PC-3 (cell line): ENCODE measurements at regions of chr1 and their contacts with region 1.

Region 1: GRCh38 chr1:52007215-52008002 is 16.9 kb upstream of the RAB3B start:
- DNase-seq: no peak
- ATAC-seq: no peak
- H3K4me3 ChIP-seq: no peak overlapping the region
- H3K27ac ChIP-seq: no peak overlapping the region
- H3K4me1 ChIP-seq: peaks cover 7% of the 10 kb centered on the region; the same call in 1 of the 2 replicates
- H3K27me3 ChIP-seq: no peaks in the 10 kb centered on the region
- CTCF ChIP-seq: no peak

Region 2: DNA sequence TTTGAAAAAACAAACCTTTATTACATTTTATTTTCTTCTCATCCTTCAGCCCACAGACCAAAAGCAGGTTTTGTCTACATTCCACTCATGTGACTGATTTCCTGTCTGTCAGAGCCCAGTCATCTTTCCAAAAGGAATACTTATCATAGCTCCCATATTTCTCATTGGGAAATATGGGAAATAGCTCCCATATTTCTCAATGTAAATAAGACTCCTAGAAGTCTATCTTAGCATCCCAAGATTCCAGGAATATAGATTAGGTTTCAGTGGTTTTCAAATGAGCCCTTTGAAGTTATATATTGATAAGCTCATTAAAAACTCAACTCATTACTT is 109.7 kb before region 1 on chr1:
- CTCF ChIA-PET with region 1: no interaction called
- POLR2A ChIA-PET with region 1: interaction called, 16 read pairs
- intact Hi-C with region 1: loop called (anchors 1 kb)
- DNase-seq: peak; percentile 94
- ATAC-seq: peak; percentile 82
- H3K4me3 ChIP-seq: peak overlapping the region; percentile 56; the same call in 1 of the 2 replicates
- H3K27ac ChIP-seq: peak overlapping the region; percentile 86
- H3K4me1 ChIP-seq: peaks cover 29% of the 10 kb centered on the region
- H3K27me3 ChIP-seq: no peaks in the 10 kb centered on the region
- CTCF ChIP-seq: no peak

Region 3: GRCh38 chr1:51973603-51974474 is 33.6 kb before region 1 on chr1:
- CTCF ChIA-PET with region 1: no interaction called
- POLR2A ChIA-PET with region 1: no interaction called
- intact Hi-C with region 1: no loop called
- DNase-seq: peak; percentile 49
- ATAC-seq: peak; percentile 9; the same call in 1 of the 2 replicates
- H3K4me3 ChIP-seq: no peak overlapping the region
- H3K27ac ChIP-seq: peak overlapping the region; percentile 20
- H3K4me1 ChIP-seq: peaks cover 50% of the 10 kb centered on the region
- H3K27me3 ChIP-seq: no peaks in the 10 kb centered on the region
- CTCF ChIP-seq: no peak

Region 4: DNA sequence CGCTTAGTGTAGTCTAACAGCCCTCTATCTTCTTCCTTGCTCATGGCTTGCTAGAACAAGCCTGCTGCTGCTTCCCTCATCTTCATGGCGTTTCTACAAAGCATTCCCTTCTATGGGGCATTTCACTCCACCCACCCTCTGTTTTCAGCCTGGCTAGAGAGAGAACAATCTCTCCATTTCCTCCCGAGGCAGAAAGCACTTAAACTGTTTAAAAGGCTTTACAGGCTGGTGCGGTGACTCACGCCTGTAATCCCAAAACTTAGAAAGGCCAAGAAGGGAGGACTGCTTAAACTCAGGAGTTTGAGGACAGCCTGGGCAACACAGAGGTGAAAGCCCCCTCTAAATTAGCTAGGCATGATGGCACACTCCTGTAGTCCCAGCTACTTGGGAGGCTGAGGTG is 379.0 kb after region 1 on chr1:
- CTCF ChIA-PET with region 1: no interaction called
- POLR2A ChIA-PET with region 1: no interaction called
- intact Hi-C with region 1: no loop called
- DNase-seq: no peak
- ATAC-seq: no peak
- H3K4me3 ChIP-seq: no peak overlapping the region
- H3K27ac ChIP-seq: no peak overlapping the region
- H3K4me1 ChIP-seq: no peaks in the 10 kb centered on the region
- H3K27me3 ChIP-seq: no peaks in the 10 kb centered on the region
- CTCF ChIP-seq: no peak